ENCODE measurements at regions of chr22 and their contacts with region 1.

Region 1: GRCh38 chr22:25183959-25184619 is 15.6 kb upstream of the CRYBB3 start:
- DNase-seq: no peak
- H3K4me3 Mint-ChIP-seq: no peak overlapping the region
- H3K27ac Mint-ChIP-seq: no peak overlapping the region
- H3K4me1 Mint-ChIP-seq: peaks cover 8% of the 10 kb centered on the region
- H3K27me3 Mint-ChIP-seq: no peaks in the 10 kb centered on the region
- CTCF ChIP-seq: no peak

Region 2: DNA sequence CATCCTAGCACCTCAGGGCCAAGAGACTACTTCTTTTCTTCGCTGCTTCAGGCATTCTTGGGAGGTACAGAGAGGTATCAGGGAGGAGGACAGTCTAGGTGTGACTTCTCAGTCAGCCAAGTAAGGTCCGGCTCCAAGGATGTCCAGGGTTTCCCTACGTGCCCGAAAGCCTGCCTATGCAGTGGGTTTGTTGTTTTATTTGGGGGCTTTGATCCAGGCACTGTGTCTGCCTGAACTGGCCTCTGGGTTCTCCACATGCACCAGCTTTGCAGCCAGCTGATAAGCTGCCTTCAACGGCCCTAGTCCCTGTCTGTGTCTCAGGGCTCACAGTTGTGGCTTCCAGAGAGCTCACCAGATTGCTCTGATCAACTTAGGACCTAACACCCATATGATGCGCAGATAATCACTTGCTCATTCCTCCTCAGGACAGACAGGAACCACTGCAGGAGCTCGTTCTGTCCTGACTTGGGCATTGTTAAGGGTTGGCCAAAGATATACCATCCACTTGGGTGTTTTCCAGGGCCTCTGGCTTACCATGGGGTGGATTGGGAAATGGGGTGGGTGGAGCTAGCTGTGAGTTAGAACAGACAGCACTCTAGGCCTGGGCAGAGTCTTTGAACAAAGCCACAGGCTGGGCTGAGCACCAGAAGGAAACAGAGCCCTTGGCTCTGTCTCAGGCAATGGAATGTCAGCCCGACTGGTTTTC is 30.0 kb before region 1 on chr22:
- CTCF ChIA-PET with region 1: no interaction called
- POLR2A ChIA-PET with region 1: no interaction called
- intact Hi-C with region 1: no loop called
- DNase-seq: peak; percentile 97
- H3K4me3 Mint-ChIP-seq: no peak overlapping the region
- H3K27ac Mint-ChIP-seq: peak overlapping the region; percentile 8
- H3K4me1 Mint-ChIP-seq: peaks cover 45% of the 10 kb centered on the region
- H3K27me3 Mint-ChIP-seq: no peaks in the 10 kb centered on the region
- CTCF ChIP-seq: no peak

Region 3: DNA sequence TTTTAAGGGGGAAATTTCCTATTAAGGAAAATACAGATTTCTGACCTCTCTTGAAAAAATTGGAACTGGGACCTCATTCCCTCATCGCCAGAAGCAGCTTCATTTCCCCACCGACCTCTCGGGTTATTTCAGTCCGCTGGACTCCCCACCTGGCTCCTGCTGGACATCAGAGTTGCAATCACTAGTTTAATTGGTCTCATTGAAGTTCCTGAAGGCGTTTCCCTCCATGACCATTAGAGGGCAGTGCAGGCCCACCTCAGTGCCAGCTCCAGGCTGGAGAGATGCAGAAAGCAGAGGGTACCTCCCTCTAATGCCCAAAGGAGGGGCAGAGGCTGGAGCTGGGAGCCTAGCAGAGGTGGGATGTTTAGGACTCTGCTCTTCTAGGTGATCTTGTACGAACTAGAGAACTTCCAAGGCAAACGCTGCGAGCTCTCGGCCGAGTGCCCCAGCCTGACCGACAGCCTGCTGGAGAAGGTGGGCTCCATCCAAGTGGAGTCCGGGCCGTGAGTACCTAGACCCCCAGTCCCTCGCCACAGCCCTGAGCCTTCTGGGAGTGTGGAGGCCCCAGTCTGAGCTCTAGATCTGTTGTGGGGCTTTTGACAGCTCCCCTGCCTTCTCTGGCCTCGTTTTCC is 18.3 kb after region 1 on chr22:
- CTCF ChIA-PET with region 1: interaction called, 20 read pairs
- POLR2A ChIA-PET with region 1: no interaction called
- intact Hi-C with region 1: no loop called
- DNase-seq: peak; percentile 69
- H3K4me3 Mint-ChIP-seq: no peak overlapping the region
- H3K27ac Mint-ChIP-seq: no peak overlapping the region
- H3K4me1 Mint-ChIP-seq: no peaks in the 10 kb centered on the region
- H3K27me3 Mint-ChIP-seq: no peaks in the 10 kb centered on the region
- CTCF ChIP-seq: peak; percentile 72

Measured in MCF 10A (cell line).